ENCODE measurements at regions of chr19 and their contacts with region 1.

Region 1: DNA sequence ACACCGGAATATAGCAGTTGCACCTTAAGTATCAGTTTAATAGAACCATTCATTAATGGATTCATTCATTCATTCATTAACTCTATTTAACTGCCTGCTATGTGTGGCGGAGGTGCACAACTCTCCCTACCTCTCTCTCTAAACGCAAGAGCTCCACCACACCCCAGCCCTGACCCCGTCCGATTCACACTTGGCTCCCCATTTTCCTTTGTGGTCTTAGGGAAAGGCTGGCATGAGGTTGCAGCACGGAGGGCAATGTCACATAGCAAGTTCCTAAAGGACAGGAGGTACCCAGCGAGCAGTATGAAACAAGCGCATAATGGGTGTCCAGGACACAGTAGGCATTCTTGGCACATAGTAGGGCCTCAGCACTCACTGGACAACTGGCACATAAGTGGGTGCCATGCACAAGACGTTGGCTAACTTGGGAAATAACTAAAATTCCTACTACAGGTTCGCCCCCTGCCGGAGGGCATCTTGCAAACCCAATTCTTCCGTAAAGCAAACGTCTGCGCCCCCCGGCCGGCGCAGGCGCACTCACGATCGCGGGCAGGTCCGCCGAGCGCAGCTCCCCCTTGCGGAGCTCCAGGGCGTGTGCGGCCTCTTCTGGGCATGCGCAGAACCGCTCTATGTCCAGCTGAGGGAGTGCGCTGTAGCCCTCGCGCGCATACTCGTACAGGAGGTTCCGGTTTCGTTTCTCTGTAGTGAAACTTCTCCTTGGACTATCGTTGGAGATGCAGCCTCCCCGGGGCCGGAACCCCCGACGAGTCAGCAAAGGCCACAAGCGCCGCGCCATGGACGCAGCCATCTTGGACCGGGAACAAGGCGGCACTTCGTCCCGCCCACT is at the start of gene SARS2:
- DNase-seq: peak; percentile 83 to 98 (median 92)
- ATAC-seq: peak; percentile 74
- H3K4me3 ChIP-seq: peak within 1 kb of the TSS; percentile 81 to 85
- H3K4me3 Mint-ChIP-seq: peak within 1 kb of the TSS; percentile 97
- H3K27ac ChIP-seq: peak within 1 kb of the TSS; percentile 85 to 87
- H3K27ac Mint-ChIP-seq: peak within 1 kb of the TSS; percentile 100
- H3K4me1 ChIP-seq: peaks cover 22% of the 10 kb centered on the region
- H3K4me1 Mint-ChIP-seq: peaks cover 39% of the 10 kb centered on the region
- H3K27me3 ChIP-seq: no peaks in the 10 kb centered on the region
- H3K27me3 Mint-ChIP-seq: no peaks in the 10 kb centered on the region
- CTCF ChIP-seq: peak; percentile 100
- total RNA-seq, gene SARS2: 24.3 to 26.1 TPM

Region 2: DNA sequence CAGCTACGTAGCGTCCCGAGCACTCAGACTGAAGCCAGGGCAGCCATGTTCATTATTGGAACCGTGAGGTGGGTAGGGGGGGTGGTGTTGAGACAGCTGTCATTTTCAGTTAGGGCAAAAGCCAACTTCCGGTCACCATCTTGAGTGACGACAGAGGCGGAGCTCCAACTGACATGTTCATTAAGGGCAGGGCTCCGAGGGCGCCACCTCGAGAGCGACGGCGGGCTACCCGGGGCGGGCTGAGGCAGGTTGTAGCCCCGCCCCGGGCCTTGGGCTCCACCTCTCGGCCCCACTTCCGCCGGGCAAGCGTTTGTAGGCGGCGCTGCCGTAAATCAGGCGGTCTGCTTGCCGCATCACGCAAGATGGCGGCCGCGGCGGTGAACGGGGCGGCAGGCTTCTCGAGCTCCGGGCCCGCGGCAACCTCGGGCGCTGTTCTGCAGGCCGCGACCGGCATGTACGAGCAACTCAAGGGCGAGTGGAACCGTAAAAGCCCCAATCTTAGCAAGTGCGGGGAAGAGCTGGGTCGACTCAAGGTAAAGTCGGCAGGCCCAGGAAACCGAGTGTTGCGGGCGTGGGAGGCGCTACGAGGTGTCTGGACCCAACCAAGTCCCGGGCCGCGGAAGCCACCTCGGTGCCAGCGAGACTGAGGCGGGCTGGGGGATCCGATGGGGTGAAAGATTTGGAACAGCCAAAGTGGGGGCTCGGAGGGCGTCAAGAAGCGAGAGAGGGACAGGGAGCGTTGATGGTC is 555.5 kb before region 1 on chr19 and contains the start of gene PSMD8:
- CTCF ChIA-PET with region 1: no interaction called
- POLR2A ChIA-PET with region 1: interaction called, 3 read pairs
- intact Hi-C with region 1: loop called in 1 of 2 experiments (anchors 1 kb)
- DNase-seq: peak; percentile 95 to 100 (median 98)
- ATAC-seq: peak; percentile 97
- H3K4me3 ChIP-seq: peak within 1 kb of the TSS; percentile 71 to 84
- H3K4me3 Mint-ChIP-seq: peak within 1 kb of the TSS; percentile 99
- H3K27ac ChIP-seq: peak within 1 kb of the TSS; percentile 83 to 89
- H3K27ac Mint-ChIP-seq: peak within 1 kb of the TSS; percentile 96
- H3K4me1 ChIP-seq: peaks cover 19% of the 10 kb centered on the region
- H3K4me1 Mint-ChIP-seq: peaks cover 29% of the 10 kb centered on the region
- H3K27me3 ChIP-seq: no peaks in the 10 kb centered on the region
- H3K27me3 Mint-ChIP-seq: peaks cover 3% of the 10 kb centered on the region
- CTCF ChIP-seq: no peak
- total RNA-seq, gene PSMD8: 71.5 to 75.1 TPM

Region 3: GRCh38 chr19:38544034-38544958 is 385.9 kb before region 1 on chr19:
- CTCF ChIA-PET with region 1: interaction called, 10 read pairs
- POLR2A ChIA-PET with region 1: no interaction called
- intact Hi-C with region 1: loop called (anchors 1 to 10 kb)
- DNase-seq: peak in 4 of 9 experiments; percentile 16 to 81 (median 64)
- ATAC-seq: peak; percentile 74
- H3K4me3 ChIP-seq: no peak overlapping the region
- H3K4me3 Mint-ChIP-seq: peak overlapping the region; percentile 9
- H3K27ac ChIP-seq: no peak overlapping the region
- H3K27ac Mint-ChIP-seq: no peak overlapping the region
- H3K4me1 ChIP-seq: peaks cover 16% of the 10 kb centered on the region
- H3K4me1 Mint-ChIP-seq: peaks cover 16% of the 10 kb centered on the region
- H3K27me3 ChIP-seq: no peaks in the 10 kb centered on the region
- H3K27me3 Mint-ChIP-seq: no peaks in the 10 kb centered on the region
- CTCF ChIP-seq: peak; percentile 67

Region 4: DNA sequence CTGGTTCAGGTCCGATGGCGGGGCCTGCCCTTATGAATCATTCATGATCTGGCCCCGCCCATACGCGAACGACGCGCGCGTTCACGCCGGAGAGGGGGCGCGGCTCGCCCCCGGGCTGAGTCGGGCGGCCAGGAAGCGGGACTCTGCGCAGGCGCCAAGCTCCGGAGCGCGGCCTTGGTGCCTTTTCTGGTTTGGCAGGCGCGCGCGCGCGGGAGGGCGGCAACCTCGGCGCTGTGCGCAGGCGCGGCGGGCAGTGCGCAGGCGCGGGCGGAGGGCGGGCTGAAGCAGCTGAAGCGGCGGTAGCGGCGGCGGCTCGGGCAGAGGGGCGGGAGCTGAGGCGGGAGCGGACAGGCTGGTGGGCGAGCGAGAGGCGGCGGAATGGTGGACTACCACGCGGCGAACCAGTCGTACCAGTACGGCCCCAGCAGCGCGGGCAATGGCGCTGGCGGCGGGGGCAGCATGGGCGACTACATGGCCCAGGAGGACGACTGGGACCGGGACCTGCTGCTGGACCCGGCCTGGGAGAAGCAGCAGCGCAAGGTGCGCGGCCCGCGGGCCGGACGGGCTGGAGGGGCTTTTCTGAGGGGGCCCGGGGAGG is 282.7 kb before region 1 on chr19 and contains the start of gene ACTN4:
- CTCF ChIA-PET with region 1: interaction called, 4 read pairs
- POLR2A ChIA-PET with region 1: interaction called, 3 read pairs
- intact Hi-C with region 1: loop called in 1 of 2 experiments (anchors 1 kb)
- DNase-seq: peak; percentile 99 to 100 (median 100)
- ATAC-seq: peak; percentile 94
- H3K4me3 ChIP-seq: peak within 1 kb of the TSS; percentile 83 to 89
- H3K4me3 Mint-ChIP-seq: peak within 1 kb of the TSS; percentile 91
- H3K27ac ChIP-seq: peak within 1 kb of the TSS; percentile 49 to 63
- H3K27ac Mint-ChIP-seq: peak within 1 kb of the TSS; percentile 73
- H3K4me1 ChIP-seq: peaks cover 23% of the 10 kb centered on the region
- H3K4me1 Mint-ChIP-seq: peaks cover 32% of the 10 kb centered on the region
- H3K27me3 ChIP-seq: peaks cover 7 to 16% of the 10 kb centered on the region in 2 experiments
- H3K27me3 Mint-ChIP-seq: peaks cover 31% of the 10 kb centered on the region
- CTCF ChIP-seq: no peak
- total RNA-seq, gene ACTN4: 110 to 111 TPM

Region 5: DNA sequence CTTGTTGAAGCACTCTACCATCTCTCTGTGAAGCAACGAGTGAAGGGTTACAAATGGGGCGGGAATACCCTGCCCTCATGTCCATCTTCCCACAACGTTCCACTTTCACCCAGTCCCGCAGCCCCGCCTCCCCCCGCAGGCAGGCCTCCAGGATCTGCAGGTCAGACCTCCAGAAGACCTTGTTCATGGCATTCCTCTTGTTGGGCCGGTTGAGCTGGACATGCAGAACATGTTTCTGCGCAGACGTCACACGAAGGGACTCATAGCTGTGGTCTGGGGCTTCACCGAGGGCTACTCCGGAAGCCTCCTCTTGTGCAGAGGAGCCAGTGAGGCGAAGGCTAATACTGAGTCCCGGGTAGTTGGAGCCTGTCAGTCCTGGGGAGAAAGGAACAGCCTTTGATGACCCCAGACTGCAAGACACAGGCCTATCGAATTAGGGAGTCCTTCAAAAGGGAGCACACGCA is 99.0 kb before region 1 on chr19:
- CTCF ChIA-PET with region 1: interaction called, 4 read pairs
- POLR2A ChIA-PET with region 1: no interaction called
- intact Hi-C with region 1: loop called in 1 of 2 experiments (anchors 1 kb)
- DNase-seq: peak in 1 of 9 experiments; percentile 63
- ATAC-seq: no peak
- H3K4me3 ChIP-seq: peak overlapping the region; percentile 74
- H3K4me3 Mint-ChIP-seq: peak overlapping the region; percentile 90
- H3K27ac ChIP-seq: peak overlapping the region; percentile 66 to 85
- H3K27ac Mint-ChIP-seq: peak overlapping the region; percentile 89
- H3K4me1 ChIP-seq: peaks cover 21% of the 10 kb centered on the region
- H3K4me1 Mint-ChIP-seq: peaks cover 37% of the 10 kb centered on the region
- H3K27me3 ChIP-seq: no peaks in the 10 kb centered on the region
- H3K27me3 Mint-ChIP-seq: no peaks in the 10 kb centered on the region
- CTCF ChIP-seq: no peak

Region 6: DNA sequence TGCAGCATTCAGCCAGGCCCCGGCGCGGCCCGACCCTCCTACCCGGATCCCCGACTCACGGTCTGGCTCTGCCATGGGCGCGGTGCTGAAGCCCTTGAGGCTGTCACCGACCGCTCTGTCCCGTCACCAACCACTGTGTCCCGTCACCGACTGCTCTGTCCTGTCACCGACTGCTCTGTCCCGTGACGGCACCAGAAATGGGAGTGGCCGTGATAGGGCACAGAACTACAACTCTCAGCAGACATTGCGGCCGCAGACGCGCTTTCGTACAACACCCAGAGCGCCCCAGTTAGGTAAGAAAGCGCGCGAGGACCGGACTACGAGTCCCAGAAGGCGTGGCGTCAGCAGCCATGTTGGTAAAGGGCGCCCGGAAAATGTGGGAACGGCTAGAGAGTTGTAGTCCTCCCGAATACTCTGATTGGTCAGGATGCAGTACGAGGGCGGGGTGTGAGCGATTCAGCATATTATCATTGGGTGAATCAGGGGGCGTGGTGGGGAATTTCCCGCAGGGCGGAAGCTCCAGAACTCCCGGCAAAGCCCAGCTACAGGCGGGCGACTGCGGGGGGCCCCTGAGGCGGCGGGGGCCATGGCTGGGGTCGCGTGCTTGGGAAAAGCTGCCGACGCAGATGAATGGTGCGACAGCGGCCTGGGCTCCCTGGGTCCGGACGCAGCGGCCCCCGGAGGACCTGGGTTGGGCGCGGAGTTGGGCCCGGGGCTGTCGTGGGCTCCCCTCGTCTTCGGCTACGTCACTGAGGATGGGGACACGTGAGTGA is 30.5 kb before region 1 on chr19 and contains the starts of genes NFKBIB and SIRT2:
- CTCF ChIA-PET with region 1: interaction called, 15 read pairs
- POLR2A ChIA-PET with region 1: interaction called, 7 read pairs
- intact Hi-C with region 1: loop called (anchors 1 kb)
- DNase-seq: peak; percentile 97 to 100 (median 99)
- ATAC-seq: peak; percentile 85
- H3K4me3 ChIP-seq: peak within 1 kb of the TSS; percentile 68 to 88
- H3K4me3 Mint-ChIP-seq: peak within 1 kb of the TSS; percentile 93
- H3K27ac ChIP-seq: peak within 1 kb of the TSS; percentile 93 to 100
- H3K27ac Mint-ChIP-seq: peak within 1 kb of the TSS; percentile 98
- H3K4me1 ChIP-seq: peaks cover 23% of the 10 kb centered on the region
- H3K4me1 Mint-ChIP-seq: peaks cover 57% of the 10 kb centered on the region
- H3K27me3 ChIP-seq: no peaks in the 10 kb centered on the region
- H3K27me3 Mint-ChIP-seq: no peaks in the 10 kb centered on the region
- CTCF ChIP-seq: no peak
- total RNA-seq, gene NFKBIB: 62.9 to 66.1 TPM
- total RNA-seq, gene SIRT2: 90.6 to 95.1 TPM

Region 7: GRCh38 chr19:39052243-39052746 is 122.1 kb after region 1 on chr19:
- CTCF ChIA-PET with region 1: no interaction called
- POLR2A ChIA-PET with region 1: no interaction called
- intact Hi-C with region 1: no loop called
- DNase-seq: peak; percentile 44 to 86 (median 71)
- ATAC-seq: no peak
- H3K4me3 ChIP-seq: no peak overlapping the region
- H3K4me3 Mint-ChIP-seq: no peak overlapping the region
- H3K27ac ChIP-seq: no peak overlapping the region
- H3K27ac Mint-ChIP-seq: no peak overlapping the region
- H3K4me1 ChIP-seq: no peaks in the 10 kb centered on the region
- H3K4me1 Mint-ChIP-seq: no peaks in the 10 kb centered on the region
- H3K27me3 ChIP-seq: no peaks in the 10 kb centered on the region
- H3K27me3 Mint-ChIP-seq: peaks cover 4% of the 10 kb centered on the region
- CTCF ChIP-seq: peak; percentile 94